HepG2 (cell line): ENCODE measurements at regions of chr1 and their contacts with region 1.

Region 1: GRCh38 chr1:159829273-159829634 is 2.6 kb downstream of the SLAMF8 start:
- DNase-seq: peak; percentile 5
- ATAC-seq: peak; percentile 98
- H3K4me3 ChIP-seq: no peak overlapping the region
- H3K27ac ChIP-seq: no peak overlapping the region
- H3K4me1 ChIP-seq: peaks cover 12% of the 10 kb centered on the region
- H3K27me3 ChIP-seq: peaks cover 3 to 12% of the 10 kb centered on the region in 2 experiments; a peak in 4 of 5 replicates
- CTCF ChIP-seq: peak; percentile 58
- EP300 ChIP-seq: no peak
- POLR2A ChIP-seq: no peak
- RAD21 ChIP-seq: no peak

Region 2: DNA sequence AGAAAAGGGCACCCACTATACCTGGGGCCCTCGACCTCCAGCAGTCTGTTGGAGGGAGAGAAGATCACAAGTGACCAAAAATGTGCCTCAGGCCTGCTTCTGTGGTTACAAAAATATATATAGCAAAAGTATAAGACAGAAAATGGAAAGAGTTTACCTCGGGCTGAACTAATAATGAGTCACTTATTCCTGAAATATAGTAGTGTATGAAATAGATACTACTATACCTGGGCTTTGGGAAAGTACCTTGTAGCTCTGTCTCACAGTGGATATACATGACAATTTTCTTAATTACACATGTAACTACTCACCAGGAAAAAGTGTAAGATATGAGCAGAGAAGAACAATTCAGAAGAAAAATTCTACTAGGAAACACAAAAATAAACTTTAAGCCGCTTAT is 248.9 kb before region 1 on chr1:
- CTCF ChIA-PET with region 1: no interaction called
- POLR2A ChIA-PET with region 1: no interaction called
- in situ Hi-C with region 1: no loop called
- intact Hi-C with region 1: no loop called
- DNase-seq: no peak
- ATAC-seq: no peak
- H3K4me3 ChIP-seq: no peak overlapping the region
- H3K27ac ChIP-seq: no peak overlapping the region
- H3K4me1 ChIP-seq: no peaks in the 10 kb centered on the region
- H3K27me3 ChIP-seq: no peaks in the 10 kb centered on the region
- CTCF ChIP-seq: no peak
- EP300 ChIP-seq: no peak
- POLR2A ChIP-seq: no peak
- RAD21 ChIP-seq: no peak

Region 3: GRCh38 chr1:159798893-159799292 is 30.4 kb before region 1 on chr1:
- CTCF ChIA-PET with region 1: no interaction called
- POLR2A ChIA-PET with region 1: no interaction called
- in situ Hi-C with region 1: no loop called
- intact Hi-C with region 1: loop called (anchors 2 kb)
- DNase-seq: peak; percentile 70
- ATAC-seq: peak; percentile 93
- H3K4me3 ChIP-seq: no peak overlapping the region
- H3K27ac ChIP-seq: no peak overlapping the region
- H3K4me1 ChIP-seq: no peaks in the 10 kb centered on the region
- H3K27me3 ChIP-seq: peaks cover 5 to 7% of the 10 kb centered on the region in 2 experiments; a peak in 2 of 5 replicates
- CTCF ChIP-seq: peak; percentile 62
- EP300 ChIP-seq: no peak
- POLR2A ChIP-seq: no peak
- RAD21 ChIP-seq: peak; percentile 47; the same call in 1 of the 2 replicates